ENCODE measurements at regions of chr17 and their contacts with region 1.

Region 1: DNA sequence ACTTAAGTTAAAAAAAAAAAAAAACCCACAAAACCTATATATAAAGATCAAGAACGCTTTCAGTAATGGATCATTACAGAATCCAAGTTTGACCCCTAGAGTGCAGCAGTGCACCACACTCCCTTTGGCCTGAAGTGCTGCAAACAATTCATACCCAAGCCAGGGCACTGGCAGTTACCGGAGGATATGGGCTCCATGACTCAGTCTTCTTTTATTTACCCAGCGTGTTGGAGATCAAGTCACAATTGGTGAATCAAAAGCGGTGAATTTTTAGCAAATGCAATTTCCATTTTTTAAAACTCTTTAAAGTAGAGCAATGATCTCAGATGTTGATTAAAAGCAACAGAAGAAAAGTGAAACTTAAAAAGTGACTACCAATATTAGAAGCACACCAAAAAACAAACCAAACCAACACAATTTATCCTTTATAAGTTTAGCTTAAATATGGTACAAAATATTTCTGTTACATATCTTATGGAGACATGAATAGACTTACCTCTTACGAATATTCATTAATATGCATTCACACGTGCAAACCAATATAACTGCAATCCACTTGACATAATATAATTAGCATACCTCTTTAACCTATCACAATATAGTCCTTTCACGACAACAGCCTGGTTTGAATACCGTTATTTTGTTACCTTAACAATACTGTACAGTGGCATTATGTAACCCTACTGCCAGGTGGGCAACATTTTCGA is 46.3 kb downstream of the ZNF652 start:
- DNase-seq: peak; percentile 62 to 74 (median 67)
- H3K4me3 ChIP-seq: no peak overlapping the region
- H3K27ac ChIP-seq: no peak overlapping the region
- H3K4me1 ChIP-seq: no peaks in the 10 kb centered on the region
- H3K27me3 ChIP-seq: no peaks in the 10 kb centered on the region
- CTCF ChIP-seq: peak; percentile 25 to 61 (median 56)
- EP300 ChIP-seq: no peak
- POLR2A ChIP-seq: no peak

Region 2: GRCh38 chr17:49230636-49231562 is 84.8 kb before region 1 on chr17 and contains the start of gene PHOSPHO1:
- intact Hi-C with region 1: no loop called
- DNase-seq: peak; percentile 65 to 86 (median 75)
- H3K4me3 ChIP-seq: peak within 1 kb of the TSS; percentile 47
- H3K27ac ChIP-seq: no peak within 1 kb of the TSS
- H3K4me1 ChIP-seq: no peaks in the 10 kb centered on the region
- H3K27me3 ChIP-seq: no peaks in the 10 kb centered on the region
- CTCF ChIP-seq: no peak
- EP300 ChIP-seq: no peak
- POLR2A ChIP-seq: no peak
- total RNA-seq, gene PHOSPHO1: 0.23 to 0.92 (median 0.26) TPM in 3 of 7 donors, not detected in the others

Region 3: DNA sequence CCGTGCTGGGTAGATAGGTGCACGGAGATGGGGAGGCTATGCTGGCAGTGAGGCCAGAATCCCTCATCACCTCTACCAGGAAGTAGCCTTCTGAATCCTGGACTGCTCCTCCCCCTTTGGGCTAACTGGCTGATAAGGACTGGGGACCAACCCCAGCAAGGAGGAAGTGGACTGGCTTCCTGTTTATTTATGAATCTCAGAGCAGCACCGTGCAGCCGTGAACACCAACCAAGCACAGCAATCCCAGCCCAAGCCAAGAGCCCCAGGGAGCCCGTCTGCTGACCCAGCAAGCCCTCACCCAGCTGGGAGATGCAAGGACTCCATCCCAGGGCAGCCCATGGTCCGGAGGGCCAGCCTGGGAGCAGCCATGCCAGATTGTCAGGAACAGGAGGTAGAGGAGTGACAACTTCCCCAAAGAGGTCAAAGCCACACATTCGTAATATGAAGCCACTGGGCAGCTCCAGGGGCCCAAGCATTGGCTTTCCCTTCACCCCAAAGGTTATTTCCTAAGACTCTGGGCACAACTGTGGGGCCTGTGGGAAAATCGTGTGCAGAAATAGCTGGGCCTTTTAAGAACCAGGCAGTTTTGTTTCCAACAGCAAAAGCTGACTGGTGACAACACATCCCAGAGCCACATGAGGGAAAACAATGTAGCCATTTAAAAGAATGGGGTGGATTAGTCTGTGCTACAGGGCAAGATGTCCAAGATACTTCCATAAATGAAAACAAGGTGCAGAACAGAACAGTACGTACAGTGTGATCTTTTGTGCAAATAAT is 75.0 kb after region 1 on chr17:
- intact Hi-C with region 1: loop called (anchors 2 to 10 kb)
- DNase-seq: no peak
- H3K4me3 ChIP-seq: no peak overlapping the region
- H3K27ac ChIP-seq: no peak overlapping the region
- H3K4me1 ChIP-seq: no peaks in the 10 kb centered on the region
- H3K27me3 ChIP-seq: no peaks in the 10 kb centered on the region
- CTCF ChIP-seq: no peak
- EP300 ChIP-seq: no peak
- POLR2A ChIP-seq: no peak

Region 4: GRCh38 chr17:49548506-49549310 is 233.0 kb after region 1 on chr17:
- intact Hi-C with region 1: loop called in 3 of 4 experiments (anchors 10 kb)
- DNase-seq: no peak
- H3K4me3 ChIP-seq: no peak overlapping the region
- H3K27ac ChIP-seq: no peak overlapping the region
- H3K4me1 ChIP-seq: no peaks in the 10 kb centered on the region
- H3K27me3 ChIP-seq: no peaks in the 10 kb centered on the region
- CTCF ChIP-seq: no peak
- EP300 ChIP-seq: no peak
- POLR2A ChIP-seq: no peak

Measured in ovary (tissue), 10 donors.